A673 (cell line): ENCODE measurements at regions of chr9 and their contacts with region 1.

Region 1: DNA sequence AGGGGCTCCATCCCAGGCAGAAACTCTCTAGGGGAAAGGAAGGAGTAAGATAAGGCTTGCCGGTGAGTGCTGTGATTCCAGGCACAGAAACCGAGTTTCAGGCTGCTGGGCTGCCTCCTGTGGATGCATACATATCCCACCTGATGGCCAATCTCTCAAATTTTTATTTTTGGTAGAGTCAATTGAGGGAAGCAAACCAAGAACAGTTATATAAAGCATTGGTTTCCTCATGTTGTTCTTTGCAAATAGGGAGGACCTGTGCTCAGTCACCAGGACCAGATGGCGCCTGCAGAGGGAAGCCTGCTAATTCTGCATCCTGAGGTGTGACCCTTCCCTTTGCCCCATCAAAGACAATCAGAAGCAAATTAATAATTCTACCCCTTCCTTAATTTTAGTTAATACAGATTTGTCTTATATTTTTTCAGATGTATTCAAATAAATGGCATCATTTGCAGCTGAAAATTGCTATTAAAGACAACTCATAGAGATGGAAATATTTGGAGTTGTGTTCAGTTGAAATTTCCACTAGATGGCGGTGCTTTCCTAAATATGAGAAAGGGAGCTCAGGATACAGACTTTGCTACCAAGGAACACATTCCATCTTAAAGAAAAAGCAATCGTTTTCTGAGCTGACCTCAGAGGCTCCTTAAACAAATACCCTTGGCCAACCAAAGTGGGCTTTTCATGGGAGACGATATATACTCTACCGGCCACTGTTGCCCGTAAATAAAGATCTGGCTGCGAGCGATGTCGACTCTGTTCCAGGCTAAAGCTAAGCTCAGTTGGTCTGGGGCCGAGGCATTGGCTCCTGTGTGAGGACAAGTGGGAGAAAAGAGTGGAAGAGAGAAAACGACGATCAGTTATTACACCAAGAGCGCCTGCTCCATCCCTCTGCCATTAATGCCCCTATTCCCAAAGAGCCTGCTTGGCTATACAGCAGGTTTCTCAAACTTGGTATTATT is 225.7 kb upstream of the KLF9 start:
- DNase-seq: peak; percentile 61
- H3K4me3 ChIP-seq: no peak overlapping the region
- H3K27ac ChIP-seq: no peak overlapping the region
- H3K4me1 ChIP-seq: no peaks in the 10 kb centered on the region
- H3K27me3 ChIP-seq: no peaks in the 10 kb centered on the region
- CTCF ChIP-seq: peak; percentile 73

Region 2: GRCh38 chr9:70924895-70925547 is 284.9 kb after region 1 on chr9:
- CTCF ChIA-PET with region 1: interaction called, 4 read pairs
- POLR2A ChIA-PET with region 1: no interaction called
- intact Hi-C with region 1: loop called (anchors 5 kb)
- DNase-seq: peak; percentile 71
- H3K4me3 ChIP-seq: no peak overlapping the region
- H3K27ac ChIP-seq: no peak overlapping the region
- H3K4me1 ChIP-seq: no peaks in the 10 kb centered on the region
- H3K27me3 ChIP-seq: no peaks in the 10 kb centered on the region
- CTCF ChIP-seq: peak; percentile 82

Region 3: DNA sequence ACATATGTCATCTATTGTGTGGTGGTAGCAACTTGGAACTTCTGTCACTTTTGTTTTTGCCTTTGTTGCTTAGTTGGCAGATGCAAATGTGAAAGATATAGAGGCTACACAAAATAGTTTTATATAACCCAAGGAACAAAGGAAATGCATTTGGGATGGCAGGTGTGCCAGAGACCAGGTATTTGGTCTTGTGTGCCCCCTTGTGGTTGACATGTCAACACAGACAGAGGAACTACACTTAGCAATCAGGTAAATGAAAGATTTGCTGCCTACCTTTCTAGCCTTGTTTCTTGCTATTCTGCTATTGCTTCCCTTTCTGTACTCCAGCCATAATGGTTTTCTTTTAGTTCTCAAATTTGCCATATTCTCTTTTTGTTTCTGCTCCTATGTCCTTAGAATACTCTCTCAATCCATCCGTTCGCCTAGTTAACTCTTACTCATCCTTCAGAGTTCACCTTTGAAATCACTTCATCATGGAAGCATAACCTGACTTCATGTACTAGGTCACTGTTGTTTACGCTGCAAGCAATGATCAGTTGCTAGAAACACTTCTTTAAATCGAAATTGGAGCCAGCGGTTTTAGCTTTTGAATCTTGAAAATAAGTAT is 361.7 kb after region 1 on chr9:
- CTCF ChIA-PET with region 1: no interaction called
- POLR2A ChIA-PET with region 1: no interaction called
- intact Hi-C with region 1: loop called (anchors 2 kb)
- DNase-seq: no peak
- H3K4me3 ChIP-seq: no peak overlapping the region
- H3K27ac ChIP-seq: no peak overlapping the region
- H3K4me1 ChIP-seq: no peaks in the 10 kb centered on the region
- H3K27me3 ChIP-seq: no peaks in the 10 kb centered on the region
- CTCF ChIP-seq: peak; percentile 54